T-cell (primary cell): ENCODE measurements at regions of chr1 and their contacts with region 1.

Region 1: GRCh38 chr1:53654246-53655210 is 84.4 kb downstream of the GLIS1 start:
- DNase-seq: no peak
- ATAC-seq: no peak
- H3K4me3 ChIP-seq: no peak overlapping the region
- H3K4me3 Mint-ChIP-seq: no peak overlapping the region
- H3K27ac ChIP-seq: no peak overlapping the region
- H3K27ac Mint-ChIP-seq: peak overlapping the region in 1 of 2 donors; percentile 19
- H3K4me1 ChIP-seq: no peaks in the 10 kb centered on the region
- H3K4me1 Mint-ChIP-seq: no peaks in the 10 kb centered on the region
- H3K27me3 ChIP-seq: peaks cover 0 to 33% of the 10 kb centered on the region in 2 experiments
- H3K27me3 Mint-ChIP-seq: peaks cover 15 to 22% of the 10 kb centered on the region in 2 donors

Region 2: DNA sequence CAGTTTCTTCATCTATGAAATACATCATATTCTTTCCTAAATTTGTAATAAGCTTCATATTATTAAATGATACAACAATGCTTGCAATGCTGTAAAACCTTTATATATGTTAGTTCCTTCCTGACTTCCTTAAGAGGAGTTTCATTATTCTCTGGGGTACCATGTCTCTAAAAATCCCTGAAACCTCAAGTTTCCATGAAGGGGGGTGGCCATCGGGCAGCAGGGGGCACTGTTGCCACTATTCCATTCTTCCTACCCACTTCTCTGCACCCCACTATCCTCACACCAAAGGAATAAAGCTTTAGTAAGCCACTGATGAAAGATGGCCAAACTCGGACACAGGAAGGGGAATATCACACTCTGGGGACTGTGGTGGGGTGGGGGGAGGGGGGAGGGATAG is 204.3 kb before region 1 on chr1:
- CTCF ChIA-PET with region 1: no interaction called
- POLR2A ChIA-PET with region 1: interaction called in 1 of 2 experiments, 11 read pairs
- DNase-seq: peak in 2 of 35 experiments; percentile 5 to 12
- ATAC-seq: no peak
- H3K4me3 ChIP-seq: no peak overlapping the region
- H3K4me3 Mint-ChIP-seq: no peak overlapping the region
- H3K27ac ChIP-seq: no peak overlapping the region
- H3K27ac Mint-ChIP-seq: no peak overlapping the region
- H3K4me1 ChIP-seq: no peaks in the 10 kb centered on the region
- H3K4me1 Mint-ChIP-seq: no peaks in the 10 kb centered on the region
- H3K27me3 ChIP-seq: no peaks in the 10 kb centered on the region
- H3K27me3 Mint-ChIP-seq: peaks cover 3 to 9% of the 10 kb centered on the region in 2 donors

Region 3: GRCh38 chr1:53572065-53572814 is 82.3 kb before region 1 on chr1:
- CTCF ChIA-PET with region 1: no interaction called
- POLR2A ChIA-PET with region 1: no interaction called
- DNase-seq: no peak
- ATAC-seq: no peak
- H3K4me3 ChIP-seq: no peak overlapping the region
- H3K4me3 Mint-ChIP-seq: no peak overlapping the region
- H3K27ac ChIP-seq: no peak overlapping the region
- H3K27ac Mint-ChIP-seq: no peak overlapping the region
- H3K4me1 ChIP-seq: peaks cover 2 to 18% of the 10 kb centered on the region in 2 experiments
- H3K4me1 Mint-ChIP-seq: peaks cover 0 to 7% (median 4%) of the 10 kb centered on the region in 3 donors
- H3K27me3 ChIP-seq: peaks cover 0 to 6% of the 10 kb centered on the region in 2 experiments
- H3K27me3 Mint-ChIP-seq: peaks cover 0 to 3% of the 10 kb centered on the region in 2 donors